SK-N-SH (cell line): ENCODE measurements at regions of chr2 and their contacts with region 1.

Region 1: DNA sequence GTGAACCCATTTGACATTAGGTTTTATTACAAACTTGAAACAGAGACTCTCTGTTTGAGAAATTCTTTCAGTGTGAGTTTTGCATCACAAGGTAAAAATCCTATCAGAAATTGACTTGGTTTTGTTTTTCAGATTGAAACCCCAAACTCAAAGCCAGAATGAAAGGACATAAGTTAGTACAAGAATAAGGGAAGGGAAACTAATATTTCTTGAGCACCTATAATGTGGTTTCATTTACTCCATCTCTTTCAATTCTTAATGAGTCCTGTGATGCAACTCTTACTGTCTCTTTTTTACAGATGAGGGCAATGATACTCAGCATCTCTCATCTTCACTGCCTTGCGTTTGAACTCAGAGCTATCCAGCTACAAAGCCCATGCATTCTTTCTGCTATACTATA is 210.0 kb upstream of the SIX3 start:
- DNase-seq: no peak
- H3K4me3 ChIP-seq: no peak overlapping the region
- H3K27ac ChIP-seq: no peak overlapping the region
- H3K4me1 ChIP-seq: no peaks in the 10 kb centered on the region
- H3K27me3 ChIP-seq: no peaks in the 10 kb centered on the region
- CTCF ChIP-seq: no peak
- EP300 ChIP-seq: no peak
- RAD21 ChIP-seq: no peak

Region 2: DNA sequence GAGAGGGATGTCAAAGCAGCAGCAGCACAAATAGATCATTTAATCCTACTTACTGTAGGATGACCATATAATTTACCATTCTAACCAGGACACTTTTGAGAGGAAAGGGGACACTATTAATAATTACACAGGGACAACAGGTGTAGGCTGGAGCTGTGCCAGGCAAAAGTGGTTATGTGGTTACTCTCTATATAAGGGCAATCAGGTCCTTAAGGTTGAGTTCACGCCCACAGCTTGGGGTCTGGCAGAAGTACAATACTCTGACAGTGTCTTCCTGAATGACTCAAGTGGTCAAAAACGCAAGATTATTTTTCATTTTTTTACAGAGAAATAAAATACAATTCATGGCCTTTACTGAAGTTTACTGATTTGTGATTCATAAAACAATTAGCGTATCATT is 373.0 kb before region 1 on chr2:
- CTCF ChIA-PET with region 1: no interaction called
- POLR2A ChIA-PET with region 1: no interaction called
- DNase-seq: no peak
- H3K4me3 ChIP-seq: no peak overlapping the region
- H3K27ac ChIP-seq: peak overlapping the region in 1 of 2 experiments; percentile 19; a peak in 2 of 4 replicates
- H3K4me1 ChIP-seq: peaks cover 6 to 9% of the 10 kb centered on the region in 2 experiments; a peak in 2 of 4 replicates
- H3K27me3 ChIP-seq: no peaks in the 10 kb centered on the region
- CTCF ChIP-seq: no peak
- EP300 ChIP-seq: no peak
- RAD21 ChIP-seq: no peak

Region 3: GRCh38 chr2:44705356-44705755 is 26.1 kb before region 1 on chr2:
- CTCF ChIA-PET with region 1: no interaction called
- POLR2A ChIA-PET with region 1: no interaction called
- DNase-seq: no peak
- H3K4me3 ChIP-seq: no peak overlapping the region
- H3K27ac ChIP-seq: peak overlapping the region in 1 of 2 experiments; percentile 100; a peak in 2 of 4 replicates
- H3K4me1 ChIP-seq: peaks cover 0 to 65% of the 10 kb centered on the region in 2 experiments; a peak in 2 of 4 replicates
- H3K27me3 ChIP-seq: no peaks in the 10 kb centered on the region
- CTCF ChIP-seq: no peak
- EP300 ChIP-seq: no peak
- RAD21 ChIP-seq: peak; percentile 3; the same call in 1 of the 2 replicates

Region 4: GRCh38 chr2:44715671-44716081 is 15.8 kb before region 1 on chr2:
- CTCF ChIA-PET with region 1: interaction called, 10 read pairs
- POLR2A ChIA-PET with region 1: no interaction called
- DNase-seq: peak; percentile 46
- H3K4me3 ChIP-seq: no peak overlapping the region
- H3K27ac ChIP-seq: peak overlapping the region in 1 of 2 experiments; percentile 31; a peak in 2 of 4 replicates
- H3K4me1 ChIP-seq: peaks cover 0 to 22% of the 10 kb centered on the region in 2 experiments; a peak in 2 of 4 replicates
- H3K27me3 ChIP-seq: no peaks in the 10 kb centered on the region
- CTCF ChIP-seq: peak; percentile 63
- EP300 ChIP-seq: 0 out of 4 replicates have a peak, but pooled peaks of 1 of the 2 experiments have one; percentile 36
- RAD21 ChIP-seq: peak; percentile 95

Region 5: GRCh38 chr2:45024600-45025291 is 293.2 kb after region 1 on chr2:
- CTCF ChIA-PET with region 1: no interaction called
- POLR2A ChIA-PET with region 1: no interaction called
- DNase-seq: no peak
- H3K4me3 ChIP-seq: no peak overlapping the region
- H3K27ac ChIP-seq: no peak overlapping the region
- H3K4me1 ChIP-seq: no peaks in the 10 kb centered on the region; a peak in 1 of 4 replicates
- H3K27me3 ChIP-seq: no peaks in the 10 kb centered on the region
- CTCF ChIP-seq: peak; percentile 67
- EP300 ChIP-seq: peak in 1 of 2 experiments; percentile 82; a peak in 2 of 4 replicates
- RAD21 ChIP-seq: peak; percentile 52